PC-3 (cell line): ENCODE measurements at regions of chr6 and their contacts with region 1.

Region 1: DNA sequence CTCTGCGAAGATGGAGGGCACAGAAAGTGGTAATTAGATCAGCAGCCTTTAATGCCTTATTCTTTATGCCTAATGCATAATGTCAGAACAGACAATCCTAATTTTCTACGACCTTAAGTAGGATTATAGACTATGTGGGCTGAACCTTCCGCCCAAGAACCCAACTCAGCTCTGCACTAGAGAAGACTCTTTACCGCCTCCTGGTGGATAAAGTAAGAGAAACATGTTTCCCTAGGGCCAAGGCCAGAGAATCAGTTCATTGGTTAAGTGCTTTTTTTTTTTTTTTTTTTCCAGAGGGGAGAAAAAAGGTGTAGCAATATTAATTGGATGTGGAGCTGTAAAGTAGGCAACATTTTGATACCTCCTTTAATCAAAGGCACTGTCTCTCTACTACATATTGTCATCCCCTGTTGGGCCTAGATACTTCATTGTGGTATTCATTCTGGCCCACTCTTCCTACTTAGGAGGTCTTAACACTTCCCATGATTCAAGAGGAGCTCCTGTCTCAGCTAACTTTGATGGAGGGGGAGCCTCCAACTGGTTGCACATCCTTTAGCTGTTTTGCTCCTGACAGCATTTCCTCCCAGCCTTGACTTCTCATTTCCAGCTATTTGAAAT is 124.9 kb upstream of the NRN1 start:
- DNase-seq: peak; percentile 70
- ATAC-seq: no peak
- H3K4me3 ChIP-seq: no peak overlapping the region
- H3K27ac ChIP-seq: no peak overlapping the region
- H3K4me1 ChIP-seq: no peaks in the 10 kb centered on the region
- H3K27me3 ChIP-seq: peaks cover 19% of the 10 kb centered on the region
- CTCF ChIP-seq: peak; percentile 69

Region 2: DNA sequence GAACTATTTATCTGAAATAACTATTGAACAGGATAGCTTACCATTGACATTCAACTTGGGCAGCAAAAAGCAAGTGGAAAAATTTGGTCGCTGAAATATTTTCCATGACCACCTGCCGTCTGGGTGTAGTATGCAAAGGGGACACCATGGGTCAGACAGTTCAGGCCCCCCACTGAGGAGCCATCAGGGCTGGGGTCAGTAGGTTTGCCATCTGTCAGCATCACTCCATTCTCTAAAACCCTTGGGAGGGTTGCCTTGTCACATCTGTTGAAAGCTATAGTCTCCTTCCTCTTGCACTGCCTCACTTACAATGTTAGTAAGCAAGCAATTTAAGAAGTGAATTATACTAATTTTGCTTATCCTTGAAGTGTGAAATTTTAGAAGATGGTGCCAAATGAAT is 169.8 kb before region 1 on chr6:
- CTCF ChIA-PET with region 1: interaction called, 12 read pairs
- POLR2A ChIA-PET with region 1: no interaction called
- intact Hi-C with region 1: no loop called
- DNase-seq: no peak
- ATAC-seq: no peak
- H3K4me3 ChIP-seq: no peak overlapping the region
- H3K27ac ChIP-seq: no peak overlapping the region
- H3K4me1 ChIP-seq: no peaks in the 10 kb centered on the region
- H3K27me3 ChIP-seq: 0 out of 2 replicates have a peak, but pooled peaks cover 5% of the 10 kb centered on the region
- CTCF ChIP-seq: no peak